Naive thymus-derived CD4-positive, alpha-beta T cell (primary cell): ENCODE measurements at regions of chr3 and their contacts with region 1.

Region 1: DNA sequence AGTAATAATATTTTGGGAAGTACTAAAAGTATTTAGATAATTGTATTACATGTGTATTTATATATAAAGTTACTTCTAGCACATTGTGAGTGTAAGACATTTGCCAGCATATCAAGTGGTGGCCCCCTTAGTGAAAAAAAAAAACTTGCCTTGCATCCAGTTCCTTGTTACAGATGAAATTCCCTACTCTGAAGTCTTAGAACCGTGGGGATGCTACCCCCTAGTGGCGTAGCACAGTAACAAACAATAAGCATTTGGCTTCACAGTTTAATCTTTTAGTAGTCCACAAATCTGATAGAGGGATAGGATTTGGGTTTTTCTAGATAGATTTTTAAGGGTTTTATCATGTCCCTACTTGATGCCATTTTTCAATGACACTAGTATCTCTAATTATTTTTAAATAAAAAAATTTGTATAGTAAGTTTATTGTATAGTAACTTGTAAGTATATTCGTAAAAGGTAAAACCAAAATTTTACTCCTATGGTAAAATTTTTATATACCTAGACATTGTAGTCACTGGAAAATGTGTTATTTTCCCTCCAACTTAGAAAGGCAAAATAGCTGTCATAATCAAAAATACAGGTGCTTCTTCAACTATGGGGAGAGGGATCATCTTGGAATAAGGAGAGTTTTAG is 14.3 kb downstream of the SMC4 start:
- DNase-seq: peak; percentile 41 to 75 (median 60)
- ATAC-seq: peak; percentile 94
- H3K4me3 ChIP-seq: no peak overlapping the region
- H3K4me3 Mint-ChIP-seq: no peak overlapping the region
- H3K27ac ChIP-seq: no peak overlapping the region
- H3K27ac Mint-ChIP-seq: peak overlapping the region in 1 of 9 donors; percentile 33
- H3K4me1 ChIP-seq: no peaks in the 10 kb centered on the region
- H3K4me1 Mint-ChIP-seq: peaks cover 2 to 48% (median 9%) of the 10 kb centered on the region in 7 donors
- H3K27me3 ChIP-seq: no peaks in the 10 kb centered on the region
- H3K27me3 Mint-ChIP-seq: no peaks in the 10 kb centered on the region

Region 2: DNA sequence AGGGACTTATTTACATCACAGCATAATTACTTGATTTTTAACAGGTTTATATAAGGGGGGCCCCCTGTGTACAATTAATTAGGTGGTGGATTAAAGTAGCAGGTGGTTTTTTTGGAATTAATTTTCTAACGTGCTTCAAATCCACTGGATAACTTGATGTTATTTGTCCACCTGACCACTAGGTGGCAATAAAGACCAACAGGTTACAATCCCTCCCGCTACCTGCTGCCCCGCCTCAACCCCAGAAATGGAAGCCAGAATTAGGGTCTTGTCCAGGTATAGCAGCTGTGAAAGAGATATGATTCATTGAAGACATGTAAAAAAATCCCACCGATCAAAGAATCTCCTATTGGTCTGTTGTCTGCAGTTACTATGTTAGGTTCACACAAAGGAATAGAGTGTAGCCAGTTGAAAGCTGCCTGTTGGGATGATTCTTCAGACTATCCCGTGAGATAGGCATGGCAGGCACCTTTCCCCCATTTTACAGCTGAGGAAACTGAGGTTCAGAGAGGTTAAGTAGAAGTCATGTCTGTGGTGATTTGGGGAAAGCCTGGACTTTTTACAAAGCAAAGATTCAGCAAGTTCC is 1567.9 kb before region 1 on chr3:
- CTCF ChIA-PET with region 1: no interaction called
- POLR2A ChIA-PET with region 1: no interaction called
- intact Hi-C with region 1: loop called in 1 of 2 experiments (anchors 1 kb)
- DNase-seq: peak in 7 of 9 donors; percentile 14 to 57 (median 44)
- ATAC-seq: peak; percentile 56
- H3K4me3 ChIP-seq: no peak overlapping the region
- H3K4me3 Mint-ChIP-seq: peak overlapping the region in 1 of 10 donors; percentile 26
- H3K27ac ChIP-seq: no peak overlapping the region
- H3K27ac Mint-ChIP-seq: peak overlapping the region in 2 of 9 donors; percentile 10 to 38
- H3K4me1 ChIP-seq: no peaks in the 10 kb centered on the region
- H3K4me1 Mint-ChIP-seq: peaks cover 0 to 22% (median 12%) of the 10 kb centered on the region in 7 donors
- H3K27me3 ChIP-seq: no peaks in the 10 kb centered on the region
- H3K27me3 Mint-ChIP-seq: no peaks in the 10 kb centered on the region

Region 3: GRCh38 chr3:159904455-159904854 is 509.3 kb before region 1 on chr3:
- CTCF ChIA-PET with region 1: no interaction called
- POLR2A ChIA-PET with region 1: interaction called, 10 read pairs
- intact Hi-C with region 1: no loop called
- DNase-seq: no peak
- ATAC-seq: peak; percentile 51
- H3K4me3 ChIP-seq: no peak overlapping the region
- H3K4me3 Mint-ChIP-seq: no peak overlapping the region
- H3K27ac ChIP-seq: no peak overlapping the region
- H3K27ac Mint-ChIP-seq: no peak overlapping the region
- H3K4me1 ChIP-seq: no peaks in the 10 kb centered on the region
- H3K4me1 Mint-ChIP-seq: peaks cover 0 to 13% (median 0%) of the 10 kb centered on the region in 7 donors
- H3K27me3 ChIP-seq: no peaks in the 10 kb centered on the region
- H3K27me3 Mint-ChIP-seq: peaks cover 12 to 45% (median 23%) of the 10 kb centered on the region in 5 donors

Region 4: DNA sequence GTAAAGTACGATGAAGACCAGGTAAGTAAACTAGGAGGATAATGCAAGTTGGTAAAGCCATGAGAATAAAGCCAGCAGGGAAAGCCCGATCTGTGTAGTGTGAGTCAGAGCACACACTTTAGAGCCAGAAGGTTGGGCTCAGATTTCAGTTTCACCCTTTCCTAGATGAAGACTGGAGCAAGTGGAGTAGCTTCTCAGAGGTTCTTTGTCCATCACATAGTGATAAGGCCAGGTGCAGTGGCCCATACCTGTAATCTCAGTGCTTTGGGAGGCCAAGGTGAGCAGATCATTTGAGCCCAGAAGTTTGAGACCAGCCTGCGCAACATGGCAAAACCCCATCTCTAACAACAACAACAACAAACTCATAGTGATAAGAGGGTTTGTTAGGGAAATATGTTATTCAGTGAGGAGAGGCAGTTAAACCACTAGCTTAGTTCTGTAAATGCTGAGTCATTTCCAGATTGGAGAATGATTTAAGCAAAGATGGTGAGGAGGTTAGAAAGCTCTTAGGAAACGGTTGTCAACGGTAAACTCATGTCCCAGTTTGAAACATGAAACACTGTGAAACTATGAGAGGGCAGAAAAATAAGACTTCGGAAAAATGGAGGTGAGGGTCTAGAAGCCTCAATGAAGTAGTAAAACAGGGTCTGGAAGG is 386.1 kb before region 1 on chr3:
- CTCF ChIA-PET with region 1: interaction called, 8 read pairs
- POLR2A ChIA-PET with region 1: no interaction called
- intact Hi-C with region 1: loop called in 1 of 2 experiments (anchors 2 kb)
- DNase-seq: peak in 1 of 9 donors; percentile 36
- ATAC-seq: peak; percentile 22
- H3K4me3 ChIP-seq: no peak overlapping the region
- H3K4me3 Mint-ChIP-seq: peak overlapping the region in 1 of 10 donors; percentile 54
- H3K27ac ChIP-seq: no peak overlapping the region
- H3K27ac Mint-ChIP-seq: peak overlapping the region in 2 of 9 donors; percentile 28 to 88
- H3K4me1 ChIP-seq: no peaks in the 10 kb centered on the region
- H3K4me1 Mint-ChIP-seq: peaks cover 0 to 33% (median 0%) of the 10 kb centered on the region in 7 donors
- H3K27me3 ChIP-seq: no peaks in the 10 kb centered on the region
- H3K27me3 Mint-ChIP-seq: no peaks in the 10 kb centered on the region

Region 5: DNA sequence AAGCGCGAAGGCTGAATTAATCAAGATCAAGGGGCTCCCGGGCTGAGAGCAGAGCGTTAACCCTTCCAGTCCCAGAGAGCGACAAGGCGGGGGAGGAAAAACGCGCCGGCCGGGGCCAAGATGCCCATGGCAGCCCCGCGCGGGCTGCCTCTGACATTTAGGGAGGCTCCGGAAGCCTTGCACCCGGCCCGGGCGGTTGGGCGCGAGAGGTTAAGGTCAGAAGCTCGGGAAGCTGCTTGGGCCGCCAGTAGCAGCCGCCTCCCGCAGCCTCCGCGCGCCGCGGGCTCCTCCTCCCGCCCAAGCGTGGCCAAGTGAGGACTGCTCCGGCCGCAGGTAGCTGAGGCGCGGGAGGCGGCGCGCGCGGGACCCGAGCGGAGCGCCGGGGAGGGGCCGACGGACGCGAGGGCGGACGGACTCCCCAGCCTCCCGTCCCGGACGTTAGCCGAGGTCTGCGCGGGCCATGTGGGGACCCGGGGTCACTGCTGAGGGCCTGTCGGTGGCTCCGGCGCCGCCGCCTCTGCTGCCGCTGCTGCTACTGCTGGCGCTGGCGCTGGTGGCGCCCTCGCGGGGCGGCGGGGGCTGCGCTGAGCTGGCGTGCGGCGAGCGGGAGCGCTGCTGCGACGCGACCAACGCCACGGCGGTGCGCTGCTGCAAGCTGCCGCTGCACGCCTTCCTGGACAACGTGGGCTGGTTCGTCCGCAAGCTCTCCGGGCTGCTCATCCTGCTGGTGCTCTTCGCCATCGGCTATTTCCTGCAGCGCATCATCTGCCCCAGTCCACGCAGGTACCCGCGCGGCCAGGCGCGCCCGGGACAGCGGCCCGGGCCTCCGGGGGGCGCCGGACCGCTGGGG is 188.3 kb before region 1 on chr3 and contains the start of gene C3orf80:
- CTCF ChIA-PET with region 1: no interaction called
- POLR2A ChIA-PET with region 1: no interaction called
- intact Hi-C with region 1: loop called in 1 of 2 experiments (anchors 5 kb)
- DNase-seq: peak in 8 of 9 donors; percentile 7 to 64 (median 34)
- ATAC-seq: peak; percentile 81
- H3K4me3 ChIP-seq: peak within 1 kb of the TSS; percentile 46
- H3K4me3 Mint-ChIP-seq: peak within 1 kb of the TSS; percentile 79 to 92 (median 86)
- H3K27ac ChIP-seq: no peak within 1 kb of the TSS
- H3K27ac Mint-ChIP-seq: no peak within 1 kb of the TSS
- H3K4me1 ChIP-seq: peaks cover 8 to 17% of the 10 kb centered on the region in 2 donors
- H3K4me1 Mint-ChIP-seq: peaks cover 9 to 23% (median 19%) of the 10 kb centered on the region in 7 donors
- H3K27me3 ChIP-seq: peaks cover 11 to 22% of the 10 kb centered on the region in 2 donors
- H3K27me3 Mint-ChIP-seq: peaks cover 46 to 75% (median 53%) of the 10 kb centered on the region in 5 donors
- total RNA-seq, gene C3orf80: 0.19 TPM in 1 of 5 experiments, not detected in the others

Region 6: GRCh38 chr3:160434071-160434470 is 20.3 kb after region 1 on chr3:
- CTCF ChIA-PET with region 1: no interaction called
- POLR2A ChIA-PET with region 1: no interaction called
- intact Hi-C with region 1: loop called in 1 of 2 experiments (anchors 2 kb)
- DNase-seq: no peak
- ATAC-seq: no peak
- H3K4me3 ChIP-seq: no peak overlapping the region
- H3K4me3 Mint-ChIP-seq: no peak overlapping the region
- H3K27ac ChIP-seq: no peak overlapping the region
- H3K27ac Mint-ChIP-seq: no peak overlapping the region
- H3K4me1 ChIP-seq: peaks cover 0 to 5% of the 10 kb centered on the region in 2 donors
- H3K4me1 Mint-ChIP-seq: peaks cover 20 to 42% (median 33%) of the 10 kb centered on the region in 7 donors
- H3K27me3 ChIP-seq: no peaks in the 10 kb centered on the region
- H3K27me3 Mint-ChIP-seq: no peaks in the 10 kb centered on the region